GM23248 (cell line): ENCODE measurements at regions of chr10 and their contacts with region 1.

Region 1: GRCh38 chr10:26743091-26743490 is 45.6 kb downstream of the PDSS1 start:
- DNase-seq: peak; percentile 80
- H3K4me3 ChIP-seq: no peak overlapping the region
- H3K27ac ChIP-seq: peak overlapping the region; percentile 77
- H3K4me1 ChIP-seq: peaks cover 24% of the 10 kb centered on the region
- H3K27me3 ChIP-seq: no peaks in the 10 kb centered on the region

Region 2: DNA sequence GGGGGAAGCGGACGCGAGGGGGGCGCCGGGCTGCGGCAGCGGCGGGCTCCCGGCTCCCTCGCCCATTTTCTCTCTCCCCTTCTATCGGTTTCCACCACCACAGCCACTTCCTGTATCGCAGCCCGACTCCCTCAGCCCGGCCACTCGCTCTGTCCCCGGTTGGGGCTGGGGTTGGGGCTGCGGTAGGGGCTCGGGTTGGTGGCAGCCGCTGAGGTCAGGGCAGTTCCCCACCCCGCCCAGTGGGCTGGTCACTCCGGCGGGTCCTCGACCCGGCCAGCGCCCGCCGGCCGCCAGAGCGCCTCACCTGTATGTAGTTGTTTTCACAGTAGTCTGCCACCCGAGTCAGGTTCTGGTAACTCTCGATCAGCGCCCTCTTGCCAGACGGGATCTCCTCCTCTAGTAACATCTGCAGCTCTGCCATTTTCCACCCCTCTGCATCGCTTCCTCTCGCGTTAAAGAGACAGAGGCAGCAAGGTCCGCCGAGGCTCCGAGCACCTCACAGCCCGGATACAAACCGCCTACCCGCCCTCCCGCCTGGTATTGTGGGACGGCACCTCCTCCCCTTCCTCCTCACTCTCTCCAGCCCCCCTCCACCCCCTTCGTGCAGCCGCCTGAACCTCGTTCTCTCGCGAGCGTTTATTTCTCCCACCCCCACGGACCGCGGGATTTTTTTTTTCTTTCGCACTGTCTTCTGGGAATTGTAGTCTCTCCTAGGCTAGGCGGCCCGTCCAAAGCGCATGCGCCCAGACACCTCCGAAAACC is 117.5 kb after region 1 on chr10 and contains the start of gene ABI1:
- in situ Hi-C with region 1: loop called (anchors 10 kb)
- DNase-seq: peak; percentile 98
- H3K4me3 ChIP-seq: peak within 1 kb of the TSS; percentile 98
- H3K27ac ChIP-seq: peak within 1 kb of the TSS; percentile 89
- H3K4me1 ChIP-seq: peaks cover 24% of the 10 kb centered on the region
- H3K27me3 ChIP-seq: no peaks in the 10 kb centered on the region
- total RNA-seq, gene ABI1: 60.3 and 68.2 TPM in 2 replicates